Transverse colon (tissue), 4 donors: ENCODE measurements at regions of chr1 and their contacts with region 1.

Region 1: DNA sequence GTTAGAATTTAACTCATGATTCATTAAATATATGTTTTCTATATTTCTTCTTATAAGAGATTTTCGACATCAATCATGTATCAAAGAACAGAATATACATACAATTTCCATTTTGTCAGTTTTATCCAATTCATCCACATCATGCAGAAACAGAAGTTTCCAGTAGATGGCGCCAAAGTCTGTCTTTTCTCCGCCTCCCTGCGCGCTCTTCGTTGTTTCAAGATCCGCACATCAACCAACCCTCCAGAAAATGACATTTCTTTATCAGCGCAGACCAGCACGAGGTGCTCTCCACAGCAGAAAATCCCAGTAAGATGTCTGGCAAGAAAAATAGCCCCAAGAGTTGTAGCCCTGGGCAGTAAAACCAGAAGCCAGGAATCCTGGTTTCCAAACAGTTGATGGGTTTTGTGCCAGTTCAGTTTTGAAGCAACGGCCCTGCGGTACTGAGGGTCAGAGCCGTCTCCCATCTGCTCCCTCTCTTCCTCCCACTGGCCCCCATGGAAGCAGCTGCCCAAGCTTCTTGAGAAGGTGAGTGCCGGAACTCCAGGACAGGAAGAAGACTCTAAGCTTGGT is 38.6 kb upstream of the GPR137B start:
- DNase-seq: peak; percentile 46
- H3K4me3 ChIP-seq: no peak overlapping the region
- H3K27ac ChIP-seq: no peak overlapping the region
- H3K4me1 ChIP-seq: no peaks in the 10 kb centered on the region
- H3K27me3 ChIP-seq: no peaks in the 10 kb centered on the region
- CTCF ChIP-seq: peak; percentile 78 to 86 (median 82)
- EP300 ChIP-seq: no peak
- POLR2A ChIP-seq: no peak

Region 2: DNA sequence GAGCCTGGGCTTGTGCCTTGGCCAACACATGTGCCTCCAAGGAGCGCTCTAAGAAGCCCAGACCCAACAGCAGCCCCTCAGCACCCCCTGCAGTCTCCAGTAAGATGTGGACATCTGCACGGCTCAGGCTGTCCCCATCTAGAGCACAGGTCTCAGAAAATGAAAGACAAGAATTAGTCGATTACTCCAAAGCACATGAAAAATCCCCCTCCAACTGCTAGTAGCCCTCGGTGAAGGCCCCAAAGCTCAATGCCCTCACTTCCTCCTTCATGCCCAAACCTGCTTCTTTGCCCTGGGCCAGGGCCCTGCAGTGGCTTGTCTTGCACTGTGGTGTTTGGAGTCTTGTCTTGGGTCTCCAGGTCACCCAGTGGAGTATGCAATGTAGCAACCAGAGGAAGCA is 200.0 kb after region 1 on chr1:
- in situ Hi-C with region 1: loop called in 1 of 4 experiments (anchors 25 kb)
- intact Hi-C with region 1: no loop called
- DNase-seq: no peak
- H3K4me3 ChIP-seq: no peak overlapping the region
- H3K27ac ChIP-seq: no peak overlapping the region
- H3K4me1 ChIP-seq: no peaks in the 10 kb centered on the region
- H3K27me3 ChIP-seq: no peaks in the 10 kb centered on the region
- CTCF ChIP-seq: no peak
- EP300 ChIP-seq: no peak
- POLR2A ChIP-seq: no peak

Region 3: DNA sequence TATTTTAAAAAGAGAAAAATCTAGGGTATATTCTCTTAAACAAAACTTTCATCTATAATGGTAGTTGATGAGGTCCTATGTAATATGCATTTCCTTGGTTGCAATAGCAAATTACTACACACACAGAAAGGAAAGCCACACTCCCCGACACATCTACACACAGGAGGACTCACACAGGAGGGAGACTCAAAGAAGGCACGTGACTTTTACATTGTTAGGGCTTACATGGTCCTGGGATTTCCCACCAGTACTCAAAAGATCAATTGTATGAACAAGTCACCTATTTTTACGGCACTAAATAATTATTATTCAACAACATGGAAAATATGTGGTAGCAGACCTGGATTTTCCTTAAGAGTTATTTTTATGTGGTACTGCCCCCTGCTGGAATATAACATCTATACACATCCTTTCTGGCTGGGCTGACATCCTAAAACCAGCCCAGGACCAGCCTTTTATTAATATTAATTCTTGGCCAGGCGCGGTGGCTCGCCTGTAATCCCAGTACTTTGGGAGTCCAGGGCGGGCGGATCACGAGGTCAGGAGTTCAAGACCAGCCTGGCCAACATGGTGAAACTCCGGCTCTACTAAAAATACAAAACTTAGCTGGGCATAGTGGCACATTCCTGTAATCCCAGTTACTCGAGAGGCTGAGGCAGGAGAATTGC is 386.1 kb after region 1 on chr1:
- in situ Hi-C with region 1: loop called in 1 of 4 experiments (anchors 5 kb)
- intact Hi-C with region 1: loop called (anchors 2 kb)
- DNase-seq: no peak
- H3K4me3 ChIP-seq: no peak overlapping the region
- H3K27ac ChIP-seq: no peak overlapping the region
- H3K4me1 ChIP-seq: no peaks in the 10 kb centered on the region
- H3K27me3 ChIP-seq: no peaks in the 10 kb centered on the region
- CTCF ChIP-seq: peak; percentile 58 to 70 (median 62)
- EP300 ChIP-seq: no peak
- POLR2A ChIP-seq: no peak

Region 4: GRCh38 chr1:236603991-236604904 is 500.5 kb after region 1 on chr1 and contains the start of gene HEATR1:
- in situ Hi-C with region 1: no loop called
- intact Hi-C with region 1: loop called (anchors 2 kb)
- DNase-seq: peak; percentile 94
- H3K4me3 ChIP-seq: peak within 1 kb of the TSS; percentile 60 to 96 (median 82)
- H3K27ac ChIP-seq: peak within 1 kb of the TSS; percentile 75 to 90 (median 82)
- H3K4me1 ChIP-seq: peaks cover 0 to 12% (median 9%) of the 10 kb centered on the region in 4 donors
- H3K27me3 ChIP-seq: peaks cover 15% of the 10 kb centered on the region
- CTCF ChIP-seq: no peak
- EP300 ChIP-seq: no peak
- POLR2A ChIP-seq: peak; percentile 43
- total RNA-seq, gene HEATR1: 9.4 to 15.7 (median 13.2) TPM

Region 5: GRCh38 chr1:236868625-236869467 is 765.1 kb after region 1 on chr1:
- in situ Hi-C with region 1: loop called in 2 of 4 experiments (anchors 25 kb)
- intact Hi-C with region 1: no loop called
- DNase-seq: peak; percentile 33
- H3K4me3 ChIP-seq: no peak overlapping the region
- H3K27ac ChIP-seq: no peak overlapping the region
- H3K4me1 ChIP-seq: no peaks in the 10 kb centered on the region
- H3K27me3 ChIP-seq: no peaks in the 10 kb centered on the region
- CTCF ChIP-seq: peak; percentile 80 to 97 (median 88)
- EP300 ChIP-seq: no peak
- POLR2A ChIP-seq: no peak

Region 6: GRCh38 chr1:237562242-237562823 is 1458.6 kb after region 1 on chr1:
- in situ Hi-C with region 1: loop called in 1 of 4 experiments (anchors 25 kb)
- intact Hi-C with region 1: no loop called
- DNase-seq: no peak
- H3K4me3 ChIP-seq: no peak overlapping the region
- H3K27ac ChIP-seq: no peak overlapping the region
- H3K4me1 ChIP-seq: no peaks in the 10 kb centered on the region
- H3K27me3 ChIP-seq: no peaks in the 10 kb centered on the region
- CTCF ChIP-seq: peak; percentile 46 to 66 (median 51)
- EP300 ChIP-seq: no peak
- POLR2A ChIP-seq: no peak